Astrocyte of the cerebellum (primary cell): ENCODE measurements at regions of chr11 and their contacts with region 1.

Region 1: DNA sequence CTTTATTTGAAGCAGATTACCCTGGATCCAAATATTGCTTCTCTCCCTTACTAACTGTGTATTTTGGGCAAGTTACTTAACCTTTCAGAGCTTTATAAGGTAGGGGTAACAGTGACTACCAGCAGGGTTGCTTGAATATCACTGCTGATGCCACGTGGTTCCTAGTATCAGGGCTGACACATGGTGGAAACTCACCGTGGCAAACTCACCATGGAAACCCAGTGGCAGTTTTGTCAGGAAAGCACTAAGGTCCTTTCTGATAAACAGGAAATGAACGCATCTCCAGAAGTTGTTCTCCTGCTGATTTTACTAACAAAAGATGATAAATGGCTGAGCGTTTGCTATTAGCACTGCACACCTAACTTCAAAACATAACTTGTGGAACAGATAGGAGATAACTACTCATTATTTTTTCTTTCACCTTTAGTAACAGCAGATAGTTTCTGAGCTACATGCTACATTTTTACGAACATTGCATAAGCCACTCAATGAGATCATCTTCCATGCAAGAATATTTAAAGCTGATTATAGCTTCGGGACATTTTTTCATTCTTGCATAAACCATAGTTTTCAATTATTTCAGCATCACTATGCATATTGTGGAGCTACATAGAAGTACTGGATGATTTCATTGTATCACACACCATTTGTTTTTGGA is 59.7 kb upstream of the RAG2 start:
- DNase-seq: no peak
- H3K4me3 ChIP-seq: no peak overlapping the region
- CTCF ChIP-seq: no peak

Region 2: DNA sequence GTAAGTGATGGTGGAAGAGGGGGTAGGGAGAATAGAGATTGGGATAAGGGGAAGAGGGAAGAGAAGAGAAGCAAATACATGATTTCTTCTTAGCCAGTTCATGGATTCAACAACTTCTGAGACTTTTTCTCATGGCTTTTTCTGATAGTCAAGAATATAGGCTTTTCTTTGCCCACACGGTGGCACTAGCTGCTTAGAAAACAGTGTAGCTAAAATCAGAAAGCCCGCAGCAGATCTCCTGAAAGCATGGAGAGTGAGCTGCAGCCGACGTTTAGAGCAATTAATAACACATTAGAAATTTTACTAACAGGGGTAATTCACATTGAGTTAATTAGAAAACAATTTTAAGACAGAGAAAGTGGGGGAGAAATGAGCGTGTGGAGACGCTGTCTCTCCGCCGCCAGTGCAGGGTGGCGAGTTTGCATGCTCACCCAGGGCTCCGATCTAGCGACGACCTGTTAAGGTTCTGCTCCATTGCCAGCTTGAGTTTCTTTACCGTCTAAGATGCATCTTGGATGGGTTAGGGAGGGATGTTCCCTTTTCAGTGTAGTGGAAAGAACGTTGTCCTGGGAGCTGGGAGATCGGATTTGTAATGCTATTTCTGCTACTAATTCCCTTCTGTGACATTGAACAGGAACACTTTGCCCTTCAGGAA is 93.2 kb before region 1 on chr11:
- in situ Hi-C with region 1: loop called (anchors 5 kb)
- DNase-seq: peak; percentile 45
- H3K4me3 ChIP-seq: peak overlapping the region; percentile 17
- CTCF ChIP-seq: peak; percentile 73

Region 3: DNA sequence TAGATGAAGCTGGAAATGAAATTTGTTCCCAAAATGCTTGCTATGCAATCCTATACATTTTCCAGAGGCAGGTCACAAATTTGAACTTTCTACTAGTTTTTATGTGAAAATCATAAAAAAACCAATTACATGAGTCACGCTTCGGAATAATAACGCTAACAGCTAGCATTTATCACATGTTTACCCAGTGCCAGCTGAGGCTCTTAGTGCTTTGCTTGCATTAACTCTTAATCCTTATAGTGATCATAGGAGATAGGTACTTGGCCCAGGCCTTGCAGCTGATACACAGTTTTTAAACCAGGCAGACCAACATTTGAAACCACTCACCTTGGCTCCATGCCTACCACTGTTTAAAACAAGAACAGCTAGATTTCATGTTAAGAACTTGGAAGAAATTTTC is 72.1 kb after region 1 on chr11:
- in situ Hi-C with region 1: no loop called
- DNase-seq: no peak
- H3K4me3 ChIP-seq: no peak overlapping the region
- CTCF ChIP-seq: no peak